ENCODE measurements at regions of chr5 and their contacts with region 1.

Region 1: DNA sequence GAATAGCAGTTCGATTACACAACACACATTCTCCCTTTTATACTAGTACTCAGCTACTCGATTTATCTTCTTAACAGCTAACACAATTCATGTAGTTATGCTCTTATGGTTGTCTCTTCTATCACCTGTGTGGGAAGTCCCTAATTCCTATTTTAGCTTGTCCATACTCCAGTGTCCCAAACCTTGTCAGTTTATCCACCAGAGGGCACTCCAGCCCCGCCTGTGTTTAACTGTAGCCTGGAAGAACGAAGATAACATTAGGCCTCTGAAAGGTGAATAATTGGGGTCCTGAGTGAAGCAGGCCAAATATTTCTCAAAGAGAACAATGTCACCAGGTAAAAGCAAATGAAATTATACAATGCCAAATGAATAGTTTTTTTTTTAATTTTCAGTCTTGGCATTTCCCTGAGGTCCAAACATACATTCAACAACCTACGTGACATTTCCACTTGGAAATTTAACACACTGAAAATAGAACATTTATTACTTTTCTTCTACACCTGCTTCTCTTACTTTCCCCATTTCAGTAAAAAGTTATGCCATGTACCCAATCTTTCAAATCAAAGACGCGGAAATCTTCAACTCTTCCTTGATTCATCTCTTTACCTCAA is 560.7 kb downstream of the HTR1A start:
- DNase-seq: peak; percentile 82
- H3K4me3 Mint-ChIP-seq: no peak overlapping the region
- H3K27ac Mint-ChIP-seq: no peak overlapping the region
- H3K4me1 Mint-ChIP-seq: no peaks in the 10 kb centered on the region
- H3K27me3 Mint-ChIP-seq: no peaks in the 10 kb centered on the region
- CTCF ChIP-seq: peak; percentile 78

Region 2: GRCh38 chr5:63125862-63126261 is 275.7 kb before region 1 on chr5:
- CTCF ChIA-PET with region 1: no interaction called
- intact Hi-C with region 1: loop called (anchors 2 kb)
- DNase-seq: peak; percentile 14
- H3K4me3 Mint-ChIP-seq: no peak overlapping the region
- H3K27ac Mint-ChIP-seq: peak overlapping the region; percentile 46
- H3K4me1 Mint-ChIP-seq: peaks cover 33% of the 10 kb centered on the region
- H3K27me3 Mint-ChIP-seq: no peaks in the 10 kb centered on the region
- CTCF ChIP-seq: peak; percentile 40

Region 3: GRCh38 chr5:63175850-63176249 is 225.7 kb before region 1 on chr5:
- CTCF ChIA-PET with region 1: no interaction called
- intact Hi-C with region 1: no loop called
- DNase-seq: no peak
- H3K4me3 Mint-ChIP-seq: no peak overlapping the region
- H3K27ac Mint-ChIP-seq: no peak overlapping the region
- H3K4me1 Mint-ChIP-seq: no peaks in the 10 kb centered on the region
- H3K27me3 Mint-ChIP-seq: no peaks in the 10 kb centered on the region
- CTCF ChIP-seq: no peak

Region 4: GRCh38 chr5:63483338-63483737 is 81.8 kb after region 1 on chr5:
- CTCF ChIA-PET with region 1: no interaction called
- intact Hi-C with region 1: no loop called
- DNase-seq: no peak
- H3K4me3 Mint-ChIP-seq: no peak overlapping the region
- H3K27ac Mint-ChIP-seq: no peak overlapping the region
- H3K4me1 Mint-ChIP-seq: no peaks in the 10 kb centered on the region
- H3K27me3 Mint-ChIP-seq: no peaks in the 10 kb centered on the region
- CTCF ChIP-seq: no peak

Region 5: GRCh38 chr5:63822614-63823013 is 421.1 kb after region 1 on chr5:
- CTCF ChIA-PET with region 1: no interaction called
- intact Hi-C with region 1: loop called (anchors 5 kb)
- DNase-seq: no peak
- H3K4me3 Mint-ChIP-seq: no peak overlapping the region
- H3K27ac Mint-ChIP-seq: no peak overlapping the region
- H3K4me1 Mint-ChIP-seq: no peaks in the 10 kb centered on the region
- H3K27me3 Mint-ChIP-seq: no peaks in the 10 kb centered on the region
- CTCF ChIP-seq: no peak

Region 6: GRCh38 chr5:63963080-63963735 is 561.7 kb after region 1 on chr5:
- CTCF ChIA-PET with region 1: no interaction called
- intact Hi-C with region 1: loop called (anchors 1 kb)
- DNase-seq: peak; percentile 44
- H3K4me3 Mint-ChIP-seq: no peak overlapping the region
- H3K27ac Mint-ChIP-seq: no peak overlapping the region
- H3K4me1 Mint-ChIP-seq: no peaks in the 10 kb centered on the region
- H3K27me3 Mint-ChIP-seq: no peaks in the 10 kb centered on the region
- CTCF ChIP-seq: peak; percentile 30

Region 7: DNA sequence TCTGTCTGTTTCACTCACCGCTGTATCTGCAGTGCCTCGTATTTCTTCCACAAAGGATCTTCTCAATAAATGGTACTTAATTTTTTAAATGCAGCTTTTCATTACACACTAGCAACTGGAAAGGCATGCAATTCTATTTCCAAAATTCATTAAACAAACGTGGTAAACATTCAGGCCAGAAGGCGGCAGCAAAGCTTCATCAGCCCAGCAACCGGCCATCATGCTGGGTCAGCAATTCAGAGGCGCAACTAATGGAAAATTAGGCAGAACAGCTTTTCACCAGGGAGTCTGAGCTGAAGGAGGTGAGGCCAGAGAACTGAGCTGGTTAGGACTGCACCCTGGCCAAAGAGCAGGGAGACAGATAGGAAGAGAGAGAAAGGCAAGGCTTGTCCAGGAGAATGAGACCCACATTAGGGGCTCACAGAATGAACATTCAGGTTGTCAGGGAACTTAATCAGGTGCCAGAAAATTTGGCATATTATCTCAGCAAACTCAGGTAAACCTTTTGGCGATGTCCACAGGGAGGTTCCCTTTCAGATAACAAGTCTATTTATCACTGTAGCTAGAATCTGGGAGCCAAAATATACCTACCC is 746.4 kb after region 1 on chr5:
- CTCF ChIA-PET with region 1: no interaction called
- intact Hi-C with region 1: loop called (anchors 5 kb)
- DNase-seq: peak; percentile 59
- H3K4me3 Mint-ChIP-seq: no peak overlapping the region
- H3K27ac Mint-ChIP-seq: no peak overlapping the region
- H3K4me1 Mint-ChIP-seq: no peaks in the 10 kb centered on the region
- H3K27me3 Mint-ChIP-seq: peaks cover 12% of the 10 kb centered on the region
- CTCF ChIP-seq: peak; percentile 67

Region 8: DNA sequence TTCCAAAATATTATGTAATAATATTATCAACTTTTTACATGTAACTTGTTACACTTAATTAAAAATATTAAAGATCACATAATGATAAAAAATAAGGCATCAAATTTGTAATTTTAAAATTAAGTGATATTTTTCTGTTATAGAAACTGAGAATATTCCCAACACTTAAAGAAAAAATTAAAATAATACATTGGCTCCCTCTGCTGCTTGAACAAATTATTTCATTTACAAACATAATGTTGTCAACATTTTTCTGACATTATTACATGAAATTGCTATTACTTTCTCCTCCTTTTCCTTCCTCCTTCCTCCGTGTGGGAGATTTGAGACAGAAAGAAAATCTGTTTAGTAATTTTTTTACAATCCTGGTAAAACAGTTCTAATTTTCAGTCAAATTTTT is 806.4 kb after region 1 on chr5:
- CTCF ChIA-PET with region 1: no interaction called
- intact Hi-C with region 1: loop called (anchors 5 kb)
- DNase-seq: peak; percentile 3
- H3K4me3 Mint-ChIP-seq: no peak overlapping the region
- H3K27ac Mint-ChIP-seq: no peak overlapping the region
- H3K4me1 Mint-ChIP-seq: peaks cover 9% of the 10 kb centered on the region
- H3K27me3 Mint-ChIP-seq: no peaks in the 10 kb centered on the region
- CTCF ChIP-seq: no peak